CD4-positive, alpha-beta T cell (primary cell): ENCODE measurements at regions of chr7 and their contacts with region 1.

Region 1: GRCh38 chr7:43590862-43591550 is 8.1 kb downstream of the STK17A start:
- DNase-seq: no peak
- ATAC-seq: no peak
- H3K4me3 ChIP-seq: peak overlapping the region; percentile 13
- H3K4me3 Mint-ChIP-seq: peak overlapping the region; percentile 77
- H3K27ac ChIP-seq: peak overlapping the region in 1 of 2 donors; percentile 87
- H3K27ac Mint-ChIP-seq: peak overlapping the region; percentile 98
- H3K4me1 ChIP-seq: peaks cover 53% of the 10 kb centered on the region
- H3K4me1 Mint-ChIP-seq: peaks cover 87% of the 10 kb centered on the region
- H3K27me3 ChIP-seq: no peaks in the 10 kb centered on the region
- H3K27me3 Mint-ChIP-seq: no peaks in the 10 kb centered on the region
- CTCF ChIP-seq: no peak

Region 2: GRCh38 chr7:43377196-43377960 is 213.6 kb before region 1 on chr7:
- CTCF ChIA-PET with region 1: no interaction called
- POLR2A ChIA-PET with region 1: no interaction called
- intact Hi-C with region 1: no loop called
- DNase-seq: no peak
- ATAC-seq: no peak
- H3K4me3 ChIP-seq: no peak overlapping the region
- H3K4me3 Mint-ChIP-seq: no peak overlapping the region
- H3K27ac ChIP-seq: no peak overlapping the region
- H3K27ac Mint-ChIP-seq: no peak overlapping the region
- H3K4me1 ChIP-seq: no peaks in the 10 kb centered on the region
- H3K4me1 Mint-ChIP-seq: no peaks in the 10 kb centered on the region
- H3K27me3 ChIP-seq: peaks cover 0 to 3% of the 10 kb centered on the region in 2 experiments
- H3K27me3 Mint-ChIP-seq: peaks cover 27% of the 10 kb centered on the region
- CTCF ChIP-seq: no peak

Region 3: DNA sequence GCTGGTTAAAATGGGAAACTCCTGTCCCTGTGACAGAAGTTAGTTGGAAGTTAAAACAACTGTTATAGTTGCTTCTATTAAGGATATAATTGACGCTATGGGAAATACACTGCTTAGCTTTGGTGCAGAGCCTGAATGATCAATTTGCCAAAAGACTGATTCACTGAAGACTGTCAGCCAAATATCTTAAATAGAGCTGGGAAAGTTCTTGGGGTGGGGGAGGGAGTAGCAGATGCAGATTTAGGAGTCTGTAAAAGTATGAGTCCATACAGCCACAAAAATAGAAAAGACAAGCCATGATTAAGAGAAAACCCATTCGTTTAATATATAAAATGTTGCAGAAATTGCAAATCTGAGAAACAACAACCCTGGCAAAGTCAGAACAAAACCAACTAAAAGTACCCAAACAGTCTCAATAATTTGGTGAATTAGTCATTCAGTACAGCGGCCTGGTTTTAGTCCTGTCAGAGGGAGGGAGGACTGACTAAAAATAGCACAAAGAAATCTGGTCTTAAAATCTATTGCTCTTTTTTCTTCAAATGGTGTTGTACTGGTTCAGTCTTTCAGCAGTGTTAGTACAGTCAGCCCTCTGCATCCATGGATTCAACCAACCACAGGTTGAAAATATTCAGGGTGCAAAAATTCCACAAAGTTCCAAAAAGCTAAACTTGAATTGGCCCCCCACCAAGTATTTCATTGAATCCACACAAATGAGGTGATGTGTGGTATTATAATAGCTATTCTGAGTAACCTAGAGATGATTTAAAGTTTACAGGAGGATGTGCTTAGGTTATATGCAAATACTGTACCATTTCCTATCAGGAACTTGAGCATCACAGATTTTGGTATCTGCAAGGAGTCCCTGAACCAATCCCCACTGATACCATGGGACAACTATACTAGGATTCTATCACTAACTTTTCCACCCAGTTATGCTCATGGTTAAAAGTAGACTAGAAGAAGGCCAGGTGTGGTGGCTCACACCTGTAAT is 21.9 kb after region 1 on chr7:
- CTCF ChIA-PET with region 1: interaction called, 3 read pairs
- POLR2A ChIA-PET with region 1: interaction called, 7 read pairs
- intact Hi-C with region 1: loop called in 1 of 2 experiments (anchors 2 kb)
- DNase-seq: no peak
- ATAC-seq: peak; percentile 25
- H3K4me3 ChIP-seq: no peak overlapping the region
- H3K4me3 Mint-ChIP-seq: peak overlapping the region; percentile 23
- H3K27ac ChIP-seq: peak overlapping the region; percentile 40 to 44
- H3K27ac Mint-ChIP-seq: peak overlapping the region; percentile 72
- H3K4me1 ChIP-seq: peaks cover 62% of the 10 kb centered on the region
- H3K4me1 Mint-ChIP-seq: peaks cover 55% of the 10 kb centered on the region
- H3K27me3 ChIP-seq: no peaks in the 10 kb centered on the region
- H3K27me3 Mint-ChIP-seq: no peaks in the 10 kb centered on the region
- CTCF ChIP-seq: no peak